Naive thymus-derived CD4-positive, alpha-beta T cell (primary cell): ENCODE measurements at regions of chr15 and their contacts with region 1.

Region 1: DNA sequence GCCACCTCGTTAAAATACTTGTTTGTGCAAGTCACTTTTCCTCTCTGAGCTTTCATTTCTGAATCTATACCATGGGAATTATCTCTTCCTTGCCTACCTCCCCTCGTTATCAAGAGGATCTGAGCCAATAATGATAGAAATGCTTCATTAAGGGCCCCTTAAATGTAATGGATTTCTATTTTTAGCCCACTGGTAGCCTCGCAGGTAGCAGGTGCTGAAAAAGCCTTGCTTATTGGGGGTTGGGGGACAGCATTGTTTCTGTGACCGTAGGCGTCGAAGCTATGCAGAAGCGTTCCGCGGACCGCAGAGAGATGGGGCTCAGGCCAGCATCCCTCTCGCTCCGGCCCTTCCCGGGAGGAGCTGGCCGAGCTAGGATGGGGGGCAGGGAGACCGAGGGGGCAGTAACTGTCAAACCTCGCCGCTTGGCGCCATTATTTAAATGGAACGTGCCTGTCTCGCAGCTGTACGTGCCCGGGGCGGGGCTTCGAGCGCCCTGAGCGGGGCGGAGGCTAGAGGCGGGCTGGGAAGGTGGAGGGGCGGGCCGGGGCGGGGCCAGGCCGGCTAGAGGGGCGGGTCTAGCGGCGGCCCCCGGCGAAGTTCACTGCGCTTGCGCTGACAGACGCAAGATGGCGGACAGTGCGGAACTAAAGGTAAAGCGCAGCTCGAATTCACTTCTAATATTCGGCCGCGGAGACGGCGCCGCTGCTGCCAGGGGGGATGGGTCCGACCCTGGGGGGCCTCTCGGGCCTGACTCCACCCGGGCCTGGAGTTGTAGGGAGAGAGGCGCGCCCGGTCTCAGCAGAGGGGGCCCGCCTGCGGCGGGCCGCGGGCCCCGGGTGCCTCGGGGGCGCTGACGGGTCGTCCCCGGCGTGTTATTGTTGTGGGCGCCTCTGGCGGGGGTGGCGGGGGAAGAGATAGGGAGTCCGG is at the start of gene PIAS1:
- DNase-seq: peak; percentile 87 to 94 (median 92)
- ATAC-seq: peak; percentile 96
- H3K4me3 ChIP-seq: peak within 1 kb of the TSS; percentile 87
- H3K4me3 Mint-ChIP-seq: peak within 1 kb of the TSS; percentile 89 to 97 (median 95)
- H3K27ac ChIP-seq: peak within 1 kb of the TSS; percentile 93
- H3K27ac Mint-ChIP-seq: peak within 1 kb of the TSS; percentile 84 to 97 (median 92)
- H3K4me1 ChIP-seq: peaks cover 21 to 35% of the 10 kb centered on the region in 2 donors
- H3K4me1 Mint-ChIP-seq: peaks cover 28 to 46% (median 39%) of the 10 kb centered on the region in 7 donors
- H3K27me3 ChIP-seq: no peaks in the 10 kb centered on the region
- H3K27me3 Mint-ChIP-seq: peaks cover 0 to 15% (median 0%) of the 10 kb centered on the region in 5 donors
- total RNA-seq, gene PIAS1: 41.3 to 103 (median 90.9) TPM

Region 2: GRCh38 chr15:67521029-67521811 is 532.7 kb before region 1 on chr15 and contains the start of gene C15orf61:
- CTCF ChIA-PET with region 1: no interaction called
- POLR2A ChIA-PET with region 1: no interaction called
- intact Hi-C with region 1: loop called in 1 of 2 experiments (anchors 10 kb)
- DNase-seq: peak; percentile 78 to 92 (median 82)
- ATAC-seq: peak; percentile 90
- H3K4me3 ChIP-seq: peak within 1 kb of the TSS; percentile 87
- H3K4me3 Mint-ChIP-seq: peak within 1 kb of the TSS; percentile 85 to 98 (median 95)
- H3K27ac ChIP-seq: peak within 1 kb of the TSS; percentile 85
- H3K27ac Mint-ChIP-seq: peak within 1 kb of the TSS; percentile 88 to 96 (median 94)
- H3K4me1 ChIP-seq: peaks cover 16 to 28% of the 10 kb centered on the region in 2 donors
- H3K4me1 Mint-ChIP-seq: peaks cover 20 to 40% (median 34%) of the 10 kb centered on the region in 7 donors
- H3K27me3 ChIP-seq: no peaks in the 10 kb centered on the region
- H3K27me3 Mint-ChIP-seq: no peaks in the 10 kb centered on the region
- total RNA-seq, gene C15orf61: 4.3 to 11.0 (median 8.2) TPM

Region 3: GRCh38 chr15:68038246-68038645 is 15.7 kb before region 1 on chr15:
- CTCF ChIA-PET with region 1: no interaction called
- POLR2A ChIA-PET with region 1: no interaction called
- intact Hi-C with region 1: no loop called
- DNase-seq: no peak
- ATAC-seq: no peak
- H3K4me3 ChIP-seq: no peak overlapping the region
- H3K4me3 Mint-ChIP-seq: no peak overlapping the region
- H3K27ac ChIP-seq: no peak overlapping the region
- H3K27ac Mint-ChIP-seq: no peak overlapping the region
- H3K4me1 ChIP-seq: no peaks in the 10 kb centered on the region
- H3K4me1 Mint-ChIP-seq: peaks cover 0 to 2% (median 0%) of the 10 kb centered on the region in 7 donors
- H3K27me3 ChIP-seq: peaks cover 0 to 5% of the 10 kb centered on the region in 2 donors
- H3K27me3 Mint-ChIP-seq: peaks cover 32 to 66% (median 45%) of the 10 kb centered on the region in 5 donors

Region 4: GRCh38 chr15:68097029-68097428 is 43.1 kb after region 1 on chr15:
- CTCF ChIA-PET with region 1: no interaction called
- POLR2A ChIA-PET with region 1: no interaction called
- intact Hi-C with region 1: loop called in 1 of 2 experiments (anchors 5 kb)
- DNase-seq: no peak
- ATAC-seq: no peak
- H3K4me3 ChIP-seq: no peak overlapping the region
- H3K4me3 Mint-ChIP-seq: peak overlapping the region in 3 of 10 donors; percentile 8 to 24 (median 9)
- H3K27ac ChIP-seq: no peak overlapping the region
- H3K27ac Mint-ChIP-seq: no peak overlapping the region
- H3K4me1 ChIP-seq: peaks cover 0 to 4% of the 10 kb centered on the region in 2 donors
- H3K4me1 Mint-ChIP-seq: peaks cover 30 to 70% (median 54%) of the 10 kb centered on the region in 7 donors
- H3K27me3 ChIP-seq: no peaks in the 10 kb centered on the region
- H3K27me3 Mint-ChIP-seq: no peaks in the 10 kb centered on the region

Region 5: DNA sequence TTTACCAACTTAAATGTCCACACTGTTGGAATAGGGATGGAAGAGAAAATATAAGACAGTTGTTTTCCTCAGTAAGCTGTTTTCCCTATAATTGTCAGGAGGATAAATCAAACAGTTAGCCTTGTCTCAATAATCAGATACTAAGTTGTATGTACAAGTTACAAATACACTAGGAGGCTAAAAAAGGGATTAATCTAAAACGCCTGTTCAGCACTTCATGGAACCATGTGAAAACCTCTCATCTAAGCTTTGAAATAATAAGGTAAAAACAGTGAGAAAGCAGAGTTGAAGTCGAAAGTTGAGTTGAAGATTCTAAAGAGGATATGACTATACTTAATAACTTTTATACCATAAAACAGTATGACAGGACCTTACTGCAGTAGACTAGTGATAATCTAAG is 89.2 kb after region 1 on chr15:
- CTCF ChIA-PET with region 1: no interaction called
- POLR2A ChIA-PET with region 1: interaction called, 4 read pairs
- intact Hi-C with region 1: loop called in 1 of 2 experiments (anchors 5 kb)
- DNase-seq: no peak
- ATAC-seq: no peak
- H3K4me3 ChIP-seq: no peak overlapping the region
- H3K4me3 Mint-ChIP-seq: no peak overlapping the region
- H3K27ac ChIP-seq: no peak overlapping the region
- H3K27ac Mint-ChIP-seq: no peak overlapping the region
- H3K4me1 ChIP-seq: no peaks in the 10 kb centered on the region
- H3K4me1 Mint-ChIP-seq: peaks cover 6 to 55% (median 37%) of the 10 kb centered on the region in 7 donors
- H3K27me3 ChIP-seq: no peaks in the 10 kb centered on the region
- H3K27me3 Mint-ChIP-seq: no peaks in the 10 kb centered on the region

Region 6: DNA sequence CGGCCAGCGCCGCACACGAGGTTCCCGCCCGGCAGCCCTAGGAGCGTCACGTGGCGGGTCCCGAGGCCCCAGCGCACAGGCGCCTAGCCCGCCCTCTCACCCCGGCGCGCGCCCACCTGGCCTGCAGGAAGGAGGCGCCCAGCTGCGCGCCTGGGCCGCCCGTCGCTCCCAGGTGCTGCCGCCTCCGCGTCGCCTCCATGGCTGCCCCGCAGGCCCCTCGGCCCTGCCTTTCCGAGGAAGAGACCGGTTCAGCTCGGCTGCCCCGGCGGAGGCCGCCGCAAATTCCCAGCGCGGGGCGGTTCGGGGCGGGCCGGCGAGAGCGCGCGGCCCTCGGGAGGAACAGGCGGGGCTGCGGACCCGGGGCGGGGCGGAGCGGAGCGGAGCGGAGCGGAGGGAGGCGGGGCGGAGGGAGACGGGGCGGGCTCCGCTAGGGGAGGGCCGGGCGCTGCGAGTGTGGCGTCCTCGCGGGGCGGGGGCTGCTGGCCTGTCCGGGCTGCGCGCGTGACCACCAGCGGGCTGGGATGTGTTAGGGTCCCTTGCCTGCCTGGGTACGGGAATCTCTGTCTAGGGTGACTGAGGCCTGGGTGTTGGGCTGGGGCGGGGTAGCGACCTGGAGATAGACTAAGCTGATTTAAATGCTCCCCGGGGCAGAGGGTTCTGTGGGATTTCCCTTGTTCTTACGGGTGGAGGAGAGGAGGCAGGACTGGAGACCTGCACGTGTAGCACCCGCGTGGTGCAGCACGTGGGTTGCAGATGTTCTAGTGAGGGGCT is 175.6 kb after region 1 on chr15 and contains the start of gene CLN6:
- CTCF ChIA-PET with region 1: no interaction called
- POLR2A ChIA-PET with region 1: interaction called, 5 read pairs
- intact Hi-C with region 1: loop called (anchors 1 kb)
- DNase-seq: peak; percentile 68 to 88 (median 81)
- ATAC-seq: peak; percentile 94
- H3K4me3 ChIP-seq: peak within 1 kb of the TSS; percentile 93
- H3K4me3 Mint-ChIP-seq: peak within 1 kb of the TSS; percentile 86 to 98 (median 92)
- H3K27ac ChIP-seq: peak within 1 kb of the TSS; percentile 79
- H3K27ac Mint-ChIP-seq: peak within 1 kb of the TSS; percentile 69 to 97 (median 88)
- H3K4me1 ChIP-seq: peaks cover 0 to 17% of the 10 kb centered on the region in 2 donors
- H3K4me1 Mint-ChIP-seq: peaks cover 30 to 44% (median 38%) of the 10 kb centered on the region in 7 donors
- H3K27me3 ChIP-seq: no peaks in the 10 kb centered on the region
- H3K27me3 Mint-ChIP-seq: peaks cover 0 to 3% (median 0%) of the 10 kb centered on the region in 5 donors
- total RNA-seq, gene CLN6: 15.0 to 66.6 (median 19.0) TPM

Region 7: DNA sequence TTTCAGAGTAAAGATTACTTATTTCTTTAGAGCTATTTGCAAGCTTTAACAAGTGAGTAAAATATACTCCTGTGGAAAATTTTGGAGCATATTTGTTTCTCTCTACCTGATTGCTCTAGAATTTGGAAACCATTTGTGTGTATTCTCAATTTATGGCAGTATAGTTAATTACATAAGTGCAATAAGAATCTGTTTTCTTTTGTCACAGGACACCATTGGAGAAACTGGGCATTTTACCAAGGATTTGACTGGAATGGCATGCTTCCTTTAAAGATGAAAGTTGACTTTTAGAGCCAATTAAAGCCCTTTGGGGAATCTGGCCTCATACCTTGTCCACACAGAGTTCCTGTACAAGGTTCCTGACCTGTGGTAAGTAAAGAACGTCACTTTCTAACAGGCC is 1283.2 kb after region 1 on chr15:
- CTCF ChIA-PET with region 1: no interaction called
- POLR2A ChIA-PET with region 1: no interaction called
- intact Hi-C with region 1: no loop called
- DNase-seq: no peak
- ATAC-seq: no peak
- H3K4me3 ChIP-seq: no peak overlapping the region
- H3K4me3 Mint-ChIP-seq: no peak overlapping the region
- H3K27ac ChIP-seq: no peak overlapping the region
- H3K27ac Mint-ChIP-seq: no peak overlapping the region
- H3K4me1 ChIP-seq: no peaks in the 10 kb centered on the region
- H3K4me1 Mint-ChIP-seq: peaks cover 0 to 5% (median 0%) of the 10 kb centered on the region in 7 donors
- H3K27me3 ChIP-seq: no peaks in the 10 kb centered on the region
- H3K27me3 Mint-ChIP-seq: peaks cover 0 to 16% (median 0%) of the 10 kb centered on the region in 5 donors